ENCODE measurements at regions of chr6 and their contacts with region 1.

Region 1: DNA sequence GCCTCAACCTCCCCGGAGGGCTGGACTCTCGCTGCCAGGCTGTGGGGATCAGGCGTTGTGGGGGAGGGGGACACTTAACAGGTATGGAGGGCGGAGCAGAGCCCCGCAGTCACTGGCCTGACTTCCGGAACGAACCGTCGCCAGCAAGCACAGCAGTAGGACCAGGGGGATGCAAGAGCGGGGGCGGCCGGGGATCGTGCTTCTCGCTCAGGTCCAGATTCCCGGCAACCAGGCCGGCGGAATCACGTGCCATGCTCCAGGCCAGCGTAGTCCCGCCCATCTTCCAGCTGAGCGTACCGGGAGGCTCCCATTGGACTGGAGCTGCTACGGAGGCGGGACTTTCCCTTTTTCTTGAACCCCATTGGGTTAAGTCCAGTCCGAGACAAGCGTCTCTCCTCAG is 10.0 kb upstream of the POU5F1 start:
- DNase-seq: peak; percentile 78
- H3K4me3 Mint-ChIP-seq: peak overlapping the region; percentile 81
- H3K27ac Mint-ChIP-seq: peak overlapping the region; percentile 28
- H3K4me1 Mint-ChIP-seq: peaks cover 35% of the 10 kb centered on the region
- H3K27me3 Mint-ChIP-seq: no peaks in the 10 kb centered on the region

Region 2: GRCh38 chr6:31158140-31158862 is 22.2 kb before region 1 on chr6 and contains the start of gene TCF19:
- CTCF ChIA-PET with region 1: no interaction called
- POLR2A ChIA-PET with region 1: interaction called, 11 read pairs
- DNase-seq: peak; percentile 100
- H3K4me3 Mint-ChIP-seq: peak within 1 kb of the TSS; percentile 79
- H3K27ac Mint-ChIP-seq: peak within 1 kb of the TSS; percentile 62
- H3K4me1 Mint-ChIP-seq: peaks cover 52% of the 10 kb centered on the region
- H3K27me3 Mint-ChIP-seq: no peaks in the 10 kb centered on the region
- total RNA-seq, gene TCF19: 78.9 to 80.7 TPM